ENCODE measurements at regions of chr20 and their contacts with region 1.

Region 1: DNA sequence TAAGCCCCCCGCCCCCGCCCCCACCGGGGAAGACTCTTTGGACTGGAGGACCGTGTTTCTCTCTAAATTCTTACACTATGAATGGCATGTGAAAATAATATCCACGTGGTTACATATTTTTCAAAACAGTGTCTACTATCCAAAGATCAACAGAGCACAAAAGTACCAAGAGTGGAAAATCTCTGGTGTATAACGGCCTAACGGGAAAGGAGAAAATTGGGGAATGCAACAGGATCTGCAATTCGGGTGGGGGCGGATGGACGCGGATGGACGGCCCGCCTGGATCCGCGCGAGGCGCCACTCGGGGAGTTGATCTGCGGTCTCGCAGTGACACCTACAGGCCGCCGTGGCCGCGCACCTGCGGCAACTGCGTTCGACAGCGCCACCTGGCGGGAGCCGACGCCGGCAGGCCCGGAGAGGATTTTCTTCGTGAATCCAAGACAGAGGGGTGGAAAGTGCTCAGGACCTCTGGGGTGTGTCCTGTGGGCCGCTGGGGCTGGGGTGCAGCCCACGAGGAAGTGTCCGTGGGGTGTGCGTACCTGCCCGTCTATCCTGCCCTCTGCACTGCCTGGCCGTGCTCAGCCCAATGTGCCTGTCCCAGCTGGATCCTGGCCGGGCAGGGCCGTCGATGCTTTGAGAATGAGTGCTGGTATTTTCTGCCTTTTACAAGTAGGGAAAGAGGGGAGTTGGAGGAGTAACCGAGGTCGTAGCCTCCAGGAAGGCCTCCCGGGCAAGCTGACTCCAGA is 18.6 kb downstream of the ANKRD60 start:
- DNase-seq: peak; percentile 77 to 93 (median 89)
- H3K4me3 ChIP-seq: no peak overlapping the region
- H3K27ac ChIP-seq: no peak overlapping the region
- H3K4me1 ChIP-seq: no peaks in the 10 kb centered on the region
- H3K27me3 ChIP-seq: no peaks in the 10 kb centered on the region
- CTCF ChIP-seq: peak; percentile 100
- EP300 ChIP-seq: no peak
- POLR2A ChIP-seq: no peak

Region 2: DNA sequence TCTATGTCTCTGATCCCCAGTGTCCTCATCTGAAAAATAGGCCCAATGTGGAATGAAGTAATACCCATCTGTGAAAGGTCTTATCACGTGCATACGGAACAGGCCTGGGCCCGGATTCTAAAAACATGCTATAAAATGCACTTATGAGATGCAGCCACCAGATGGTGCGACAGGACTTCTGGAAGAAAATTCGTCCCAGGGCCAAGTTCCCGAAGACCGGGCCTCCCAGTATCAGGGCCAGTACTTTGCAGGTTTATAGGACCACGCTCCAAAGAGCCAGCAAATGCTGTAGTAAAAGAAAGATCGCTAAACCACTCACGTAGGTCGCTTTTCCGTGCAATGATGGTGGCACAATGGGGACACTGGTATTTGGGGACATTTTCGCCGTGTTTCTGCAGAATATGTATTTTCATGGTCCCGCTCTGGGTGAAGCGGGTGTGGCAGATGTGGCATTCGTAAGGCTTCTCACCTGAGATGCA is 695.5 kb before region 1 on chr20:
- intact Hi-C with region 1: loop called (anchors 2 to 10 kb)
- DNase-seq: peak; percentile 57 to 78 (median 74)
- H3K4me3 ChIP-seq: no peak overlapping the region
- H3K27ac ChIP-seq: no peak overlapping the region
- H3K4me1 ChIP-seq: no peaks in the 10 kb centered on the region
- H3K27me3 ChIP-seq: no peaks in the 10 kb centered on the region
- CTCF ChIP-seq: peak; percentile 31 to 81 (median 63)
- EP300 ChIP-seq: no peak
- POLR2A ChIP-seq: no peak

Measured in ovary (tissue), 10 donors.